Activated CD8-positive, alpha-beta T cell treated with anti-CD3 and anti-CD28 coated beads for 36 hours (primary cell): ENCODE measurements at regions of chr16 and their contacts with region 1.

Region 1: GRCh38 chr16:21611546-21612384 is 12.4 kb downstream of the METTL9 start:
- DNase-seq: peak; percentile 57
- ATAC-seq: peak; percentile 85
- H3K4me3 Mint-ChIP-seq: peak overlapping the region; percentile 34
- H3K27ac Mint-ChIP-seq: peak overlapping the region; percentile 90
- H3K4me1 Mint-ChIP-seq: peaks cover 91% of the 10 kb centered on the region
- H3K27me3 Mint-ChIP-seq: no peaks in the 10 kb centered on the region
- CTCF ChIP-seq: no peak

Region 2: DNA sequence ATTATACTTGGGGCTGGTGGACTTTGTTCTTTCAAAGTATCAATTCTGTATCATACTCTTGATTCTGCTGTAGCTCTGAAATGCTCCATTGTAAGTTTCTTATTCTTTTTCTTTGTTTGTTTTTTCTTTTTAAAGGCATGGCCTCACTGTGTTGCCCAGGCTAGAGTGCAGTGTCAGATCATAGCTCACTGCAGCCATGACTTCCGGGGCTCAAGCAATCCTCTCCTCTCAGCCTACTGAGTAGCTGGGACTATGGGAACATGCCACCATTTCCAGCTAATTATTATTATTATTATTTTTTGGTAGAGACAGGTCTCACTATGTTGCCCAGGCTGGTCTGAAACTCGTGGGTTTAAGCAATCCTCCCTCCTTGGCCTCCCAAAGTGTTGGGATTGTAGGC is 51.3 kb before region 1 on chr16:
- CTCF ChIA-PET with region 1: no interaction called
- POLR2A ChIA-PET with region 1: no interaction called
- intact Hi-C with region 1: no loop called
- DNase-seq: no peak
- ATAC-seq: no peak
- H3K4me3 Mint-ChIP-seq: no peak overlapping the region
- H3K27ac Mint-ChIP-seq: no peak overlapping the region
- H3K4me1 Mint-ChIP-seq: peaks cover under 1% of the 10 kb centered on the region
- H3K27me3 Mint-ChIP-seq: peaks cover 1% of the 10 kb centered on the region
- CTCF ChIP-seq: no peak

Region 3: DNA sequence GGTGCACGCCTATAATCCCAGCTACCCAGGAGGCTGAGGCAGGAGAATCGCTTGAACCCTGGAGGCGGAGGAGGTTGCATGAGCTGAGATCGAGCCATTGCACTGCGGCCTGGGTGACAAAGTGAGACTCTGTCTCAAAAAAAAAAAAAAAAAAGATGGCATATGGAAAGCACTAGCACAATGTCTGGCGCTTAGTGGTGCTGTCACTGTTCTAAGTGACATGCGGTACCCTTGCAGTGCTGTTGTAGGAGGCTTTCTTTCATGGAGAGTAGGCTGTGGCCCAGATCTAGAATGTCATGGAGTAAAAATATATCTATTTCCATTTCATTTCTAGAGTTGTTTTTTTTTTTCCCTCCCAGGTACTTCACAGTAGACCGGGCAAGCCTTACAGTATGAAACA is 26.9 kb before region 1 on chr16:
- CTCF ChIA-PET with region 1: interaction called, 16 read pairs
- POLR2A ChIA-PET with region 1: no interaction called
- intact Hi-C with region 1: no loop called
- DNase-seq: no peak
- ATAC-seq: no peak
- H3K4me3 Mint-ChIP-seq: no peak overlapping the region
- H3K27ac Mint-ChIP-seq: no peak overlapping the region
- H3K4me1 Mint-ChIP-seq: peaks cover 2% of the 10 kb centered on the region
- H3K27me3 Mint-ChIP-seq: no peaks in the 10 kb centered on the region
- CTCF ChIP-seq: no peak

Region 4: DNA sequence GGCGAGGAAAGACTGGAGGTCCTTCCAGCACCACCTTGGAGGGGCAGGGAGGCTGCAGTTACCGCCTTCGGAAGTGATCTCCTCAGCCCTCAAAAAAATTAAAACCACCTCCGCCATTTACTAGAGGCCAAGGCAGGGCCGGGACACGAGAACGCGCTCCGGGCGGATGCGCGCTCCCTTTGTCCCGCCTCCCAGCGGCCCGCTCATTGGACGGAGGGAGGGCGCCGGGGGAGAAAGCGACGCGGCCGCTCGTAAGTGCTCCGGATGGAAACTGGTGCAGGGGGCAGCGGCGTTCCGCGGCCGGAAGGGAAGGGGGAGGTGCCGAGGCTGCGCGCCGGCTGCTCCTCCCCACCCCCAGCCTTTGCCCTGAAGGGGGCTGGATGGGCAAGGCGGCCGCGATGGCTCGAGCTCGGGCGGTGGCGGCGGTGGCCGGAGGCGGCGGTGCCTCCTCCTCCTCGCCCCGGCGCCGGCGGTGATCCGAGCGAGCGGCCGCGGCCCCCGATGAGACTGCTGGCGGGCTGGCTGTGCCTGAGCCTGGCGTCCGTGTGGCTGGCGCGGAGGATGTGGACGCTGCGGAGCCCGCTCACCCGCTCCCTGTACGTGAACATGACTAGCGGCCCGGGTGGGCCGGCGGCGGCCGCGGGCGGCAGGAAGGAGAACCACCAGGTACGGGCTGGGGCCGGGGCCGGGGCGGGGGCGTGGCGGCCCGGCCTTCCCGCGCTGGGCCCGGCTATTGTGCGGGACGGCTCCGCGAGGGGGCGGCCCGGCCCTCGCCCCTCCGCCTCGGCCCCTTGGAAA is 12.3 kb before region 1 on chr16 and contains the start of gene METTL9:
- CTCF ChIA-PET with region 1: interaction called, 7 read pairs
- POLR2A ChIA-PET with region 1: interaction called, 18 read pairs
- intact Hi-C with region 1: no loop called
- DNase-seq: peak; percentile 95
- ATAC-seq: peak; percentile 94
- H3K4me3 Mint-ChIP-seq: peak within 1 kb of the TSS; percentile 98
- H3K27ac Mint-ChIP-seq: peak within 1 kb of the TSS; percentile 88
- H3K4me1 Mint-ChIP-seq: peaks cover 54% of the 10 kb centered on the region
- H3K27me3 Mint-ChIP-seq: no peaks in the 10 kb centered on the region
- CTCF ChIP-seq: no peak
- total RNA-seq, gene METTL9: 116 to 122 TPM

Region 5: GRCh38 chr16:21638573-21638975 is 26.8 kb after region 1 on chr16:
- CTCF ChIA-PET with region 1: interaction called, 36 read pairs
- POLR2A ChIA-PET with region 1: interaction called, 6 read pairs
- intact Hi-C with region 1: no loop called
- DNase-seq: peak; percentile 54
- ATAC-seq: peak; percentile 88
- H3K4me3 Mint-ChIP-seq: no peak overlapping the region
- H3K27ac Mint-ChIP-seq: peak overlapping the region; percentile 82
- H3K4me1 Mint-ChIP-seq: peaks cover 45% of the 10 kb centered on the region
- H3K27me3 Mint-ChIP-seq: no peaks in the 10 kb centered on the region
- CTCF ChIP-seq: no peak

Region 6: GRCh38 chr16:21646721-21647561 is 35.2 kb after region 1 on chr16:
- CTCF ChIA-PET with region 1: interaction called, 36 read pairs
- POLR2A ChIA-PET with region 1: interaction called, 4 read pairs
- intact Hi-C with region 1: loop called (anchors 5 kb)
- DNase-seq: peak; percentile 93
- ATAC-seq: peak; percentile 91
- H3K4me3 Mint-ChIP-seq: peak overlapping the region; percentile 61
- H3K27ac Mint-ChIP-seq: peak overlapping the region; percentile 93
- H3K4me1 Mint-ChIP-seq: peaks cover 52% of the 10 kb centered on the region
- H3K27me3 Mint-ChIP-seq: no peaks in the 10 kb centered on the region
- CTCF ChIP-seq: no peak

Region 7: DNA sequence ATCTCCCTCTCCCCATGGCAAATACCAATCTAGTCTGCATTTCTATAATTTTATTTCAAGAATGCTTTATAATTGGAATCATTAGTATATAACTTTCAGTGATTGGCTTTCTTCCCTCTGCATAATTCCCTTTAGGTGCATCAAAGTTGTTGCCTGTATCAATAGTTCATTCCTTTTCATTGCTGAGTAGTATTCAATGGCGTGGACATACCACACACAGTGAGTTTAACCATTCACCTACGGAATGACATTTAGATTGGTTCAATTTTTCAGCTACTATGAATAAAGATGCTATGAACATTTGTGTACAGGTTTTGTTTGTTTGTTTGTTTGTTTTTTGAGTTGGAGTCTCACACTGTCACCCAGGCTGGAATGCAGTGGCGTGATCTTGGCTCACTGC is 61.7 kb after region 1 on chr16:
- CTCF ChIA-PET with region 1: no interaction called
- POLR2A ChIA-PET with region 1: no interaction called
- intact Hi-C with region 1: no loop called
- DNase-seq: no peak
- ATAC-seq: no peak
- H3K4me3 Mint-ChIP-seq: no peak overlapping the region
- H3K27ac Mint-ChIP-seq: no peak overlapping the region
- H3K4me1 Mint-ChIP-seq: no peaks in the 10 kb centered on the region
- H3K27me3 Mint-ChIP-seq: no peaks in the 10 kb centered on the region
- CTCF ChIP-seq: no peak